ENCODE measurements at regions of chr5 and their contacts with region 1.

Region 1: DNA sequence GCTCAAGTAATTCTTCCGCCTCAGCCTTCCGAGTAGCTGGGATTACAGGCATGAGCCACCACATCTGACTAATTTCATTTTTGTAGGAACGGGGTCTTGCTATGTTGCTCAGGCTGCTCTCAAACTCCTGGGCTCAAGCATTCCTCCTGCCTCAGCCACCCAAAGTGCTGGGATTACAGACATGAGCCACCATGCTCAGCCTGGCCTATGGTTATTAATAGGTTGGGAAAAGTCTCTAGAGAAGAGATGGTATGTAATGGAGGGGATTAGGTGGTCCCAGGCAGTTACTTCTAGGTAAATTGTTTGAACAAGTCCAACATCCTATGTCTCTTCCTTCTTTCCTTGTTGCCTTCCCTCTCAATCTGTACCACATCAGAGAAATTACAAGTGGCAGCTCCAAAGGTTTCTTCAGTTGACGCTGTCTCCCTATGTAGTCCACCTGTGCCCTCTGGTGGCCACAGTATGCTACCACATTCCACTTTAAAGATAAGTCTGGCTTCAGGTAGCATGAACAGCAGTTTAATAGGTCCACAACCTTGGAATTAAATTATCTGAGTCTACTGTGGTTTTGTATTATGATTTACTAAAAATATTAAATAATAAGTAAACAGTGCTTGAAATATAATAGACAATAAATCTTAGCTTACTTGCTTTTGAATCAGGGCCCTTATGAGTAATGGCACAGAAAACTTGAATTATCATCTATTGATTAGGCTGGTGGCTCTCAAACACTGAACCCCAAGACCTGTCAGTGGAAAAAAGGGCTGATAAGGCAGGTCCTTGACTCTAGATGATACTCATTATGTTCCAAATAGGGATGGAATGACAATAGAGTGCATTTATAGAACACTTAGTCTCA is 9.7 kb downstream of the TIGD6 start:
- DNase-seq: peak; percentile 81
- ATAC-seq: peak; percentile 94
- H3K4me3 Mint-ChIP-seq: no peak overlapping the region
- H3K27ac Mint-ChIP-seq: no peak overlapping the region
- H3K4me1 Mint-ChIP-seq: no peaks in the 10 kb centered on the region
- H3K27me3 Mint-ChIP-seq: no peaks in the 10 kb centered on the region

Region 2: DNA sequence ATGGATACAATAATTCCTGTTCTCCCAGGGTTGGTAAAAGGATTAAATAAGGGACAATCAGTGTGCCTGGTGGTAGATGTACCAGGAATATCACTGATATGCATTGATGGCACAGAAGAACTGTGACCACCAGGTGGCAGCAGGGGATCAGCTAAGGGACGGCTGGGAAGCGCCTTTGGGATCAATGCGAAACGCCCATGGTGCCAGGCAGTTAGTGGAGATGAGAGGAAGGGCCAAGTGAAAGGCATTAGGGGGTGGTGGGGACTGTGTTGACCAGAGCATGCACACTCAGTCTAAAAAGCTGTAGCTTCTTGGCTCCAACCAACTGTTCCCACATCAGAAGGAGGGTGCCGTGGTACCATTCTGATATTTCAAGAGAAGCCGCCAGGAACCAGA is 353.9 kb before region 1 on chr5:
- CTCF ChIA-PET with region 1: interaction called, 10 read pairs
- POLR2A ChIA-PET with region 1: no interaction called
- intact Hi-C with region 1: loop called (anchors 1 kb)
- DNase-seq: peak; percentile 81
- ATAC-seq: peak; percentile 49
- H3K4me3 Mint-ChIP-seq: no peak overlapping the region
- H3K27ac Mint-ChIP-seq: no peak overlapping the region
- H3K4me1 Mint-ChIP-seq: peaks cover 13% of the 10 kb centered on the region
- H3K27me3 Mint-ChIP-seq: no peaks in the 10 kb centered on the region

Region 3: DNA sequence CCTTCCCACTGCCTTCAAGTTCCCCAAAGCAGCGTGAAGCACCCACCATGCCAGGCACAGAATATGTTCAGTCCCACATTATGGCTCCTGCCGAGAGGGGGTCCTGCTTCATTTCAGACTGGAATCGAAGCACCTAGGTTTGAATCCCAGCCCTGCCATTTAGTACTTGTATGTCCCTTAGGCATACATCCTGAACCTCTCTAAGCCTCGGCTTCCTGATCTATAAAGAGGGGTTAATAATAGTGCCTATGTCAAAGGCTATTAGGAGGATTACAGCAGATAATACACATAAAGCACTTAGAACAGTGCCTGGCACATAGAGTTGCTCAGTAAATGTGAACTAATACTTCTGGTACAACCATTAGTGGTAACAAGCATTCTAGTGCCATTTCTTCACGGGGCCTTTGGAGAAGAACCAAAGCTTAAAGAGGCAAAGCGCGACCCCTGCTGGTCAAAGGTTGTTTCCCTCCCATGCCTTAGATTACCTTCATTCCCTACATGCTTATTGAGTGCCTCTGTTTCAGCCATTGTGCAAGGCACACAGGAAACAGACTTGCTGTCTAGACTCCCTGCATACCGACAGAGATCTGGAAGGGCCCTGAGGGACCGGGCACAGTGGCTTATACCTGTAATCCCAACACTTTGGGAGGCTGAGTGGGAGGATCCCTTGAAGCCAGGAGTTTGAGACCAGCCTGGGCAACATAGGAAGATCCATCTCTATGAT is 162.4 kb before region 1 on chr5:
- CTCF ChIA-PET with region 1: interaction called, 116 read pairs
- POLR2A ChIA-PET with region 1: no interaction called
- intact Hi-C with region 1: no loop called
- DNase-seq: peak; percentile 91
- ATAC-seq: peak; percentile 66
- H3K4me3 Mint-ChIP-seq: no peak overlapping the region
- H3K27ac Mint-ChIP-seq: no peak overlapping the region
- H3K4me1 Mint-ChIP-seq: peaks cover 7% of the 10 kb centered on the region
- H3K27me3 Mint-ChIP-seq: no peaks in the 10 kb centered on the region

Region 4: GRCh38 chr5:149834246-149834855 is 156.4 kb before region 1 on chr5:
- CTCF ChIA-PET with region 1: interaction called, 116 read pairs
- POLR2A ChIA-PET with region 1: no interaction called
- intact Hi-C with region 1: loop called (anchors 1 kb)
- DNase-seq: peak; percentile 74
- ATAC-seq: peak; percentile 55
- H3K4me3 Mint-ChIP-seq: no peak overlapping the region
- H3K27ac Mint-ChIP-seq: no peak overlapping the region
- H3K4me1 Mint-ChIP-seq: peaks cover 5% of the 10 kb centered on the region
- H3K27me3 Mint-ChIP-seq: no peaks in the 10 kb centered on the region

Region 5: GRCh38 chr5:149852641-149853330 is 138.0 kb before region 1 on chr5:
- CTCF ChIA-PET with region 1: interaction called, 20 read pairs
- POLR2A ChIA-PET with region 1: no interaction called
- intact Hi-C with region 1: no loop called
- DNase-seq: peak; percentile 67
- ATAC-seq: no peak
- H3K4me3 Mint-ChIP-seq: no peak overlapping the region
- H3K27ac Mint-ChIP-seq: no peak overlapping the region
- H3K4me1 Mint-ChIP-seq: no peaks in the 10 kb centered on the region
- H3K27me3 Mint-ChIP-seq: no peaks in the 10 kb centered on the region

Region 6: GRCh38 chr5:149969181-149969930 is 21.4 kb before region 1 on chr5:
- CTCF ChIA-PET with region 1: interaction called, 54 read pairs
- POLR2A ChIA-PET with region 1: no interaction called
- intact Hi-C with region 1: no loop called
- DNase-seq: no peak
- ATAC-seq: no peak
- H3K4me3 Mint-ChIP-seq: no peak overlapping the region
- H3K27ac Mint-ChIP-seq: no peak overlapping the region
- H3K4me1 Mint-ChIP-seq: no peaks in the 10 kb centered on the region
- H3K27me3 Mint-ChIP-seq: no peaks in the 10 kb centered on the region

Region 7: GRCh38 chr5:150006318-150006717 is 15.6 kb after region 1 on chr5:
- CTCF ChIA-PET with region 1: interaction called, 20 read pairs
- POLR2A ChIA-PET with region 1: no interaction called
- intact Hi-C with region 1: no loop called
- DNase-seq: no peak
- ATAC-seq: no peak
- H3K4me3 Mint-ChIP-seq: no peak overlapping the region
- H3K27ac Mint-ChIP-seq: no peak overlapping the region
- H3K4me1 Mint-ChIP-seq: peaks cover 40% of the 10 kb centered on the region
- H3K27me3 Mint-ChIP-seq: no peaks in the 10 kb centered on the region

Region 8: DNA sequence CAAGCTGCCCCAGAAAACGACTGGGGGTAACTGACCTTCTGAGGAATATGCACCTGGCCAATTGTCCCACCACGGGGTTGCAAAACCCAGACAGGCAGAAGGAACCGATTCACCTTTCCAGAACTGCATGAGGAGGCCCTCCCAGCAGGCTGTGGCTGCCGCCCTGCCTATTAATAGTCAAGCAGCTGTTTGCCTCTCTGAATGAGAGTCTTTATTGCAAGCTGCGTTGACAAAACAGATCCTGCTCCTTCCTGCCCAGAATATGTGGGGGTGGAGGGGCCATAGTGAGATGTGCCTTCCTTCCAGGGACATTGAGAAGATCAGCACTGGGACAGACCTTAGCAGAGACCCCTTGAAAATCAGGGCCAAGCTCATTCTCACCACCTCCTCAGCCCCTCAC is 348.4 kb after region 1 on chr5:
- CTCF ChIA-PET with region 1: no interaction called
- POLR2A ChIA-PET with region 1: no interaction called
- intact Hi-C with region 1: no loop called
- DNase-seq: no peak
- ATAC-seq: no peak
- H3K4me3 Mint-ChIP-seq: no peak overlapping the region
- H3K27ac Mint-ChIP-seq: no peak overlapping the region
- H3K4me1 Mint-ChIP-seq: peaks cover 2% of the 10 kb centered on the region
- H3K27me3 Mint-ChIP-seq: no peaks in the 10 kb centered on the region